ENCODE measurements at regions of chrX and their contacts with region 1.

Region 1: DNA sequence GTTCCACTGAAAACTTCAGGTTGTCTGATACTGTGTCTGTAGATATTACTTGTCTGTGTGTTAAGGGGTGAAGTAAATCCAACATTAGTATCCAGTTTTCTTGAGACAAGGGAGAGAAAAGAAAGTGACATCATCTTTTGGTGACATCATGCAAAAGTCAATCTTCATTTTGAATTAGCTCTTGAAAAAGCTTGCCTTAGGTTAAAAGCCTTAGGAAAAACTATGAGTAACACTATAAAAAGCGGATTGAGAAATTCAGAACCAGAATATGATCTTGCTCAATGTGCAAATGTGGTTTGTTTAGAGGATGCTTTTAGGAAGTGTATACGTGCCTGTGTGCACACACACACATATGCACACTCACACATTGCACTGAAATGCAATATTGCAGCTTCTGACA is 345.8 kb upstream of the CASK start:
- DNase-seq: no peak
- ATAC-seq: no peak
- H3K4me3 ChIP-seq: no peak overlapping the region
- H3K27ac ChIP-seq: no peak overlapping the region
- H3K4me1 ChIP-seq: no peaks in the 10 kb centered on the region
- H3K27me3 ChIP-seq: no peaks in the 10 kb centered on the region
- CTCF ChIP-seq: no peak
- POLR2A ChIP-seq: no peak

Region 2: DNA sequence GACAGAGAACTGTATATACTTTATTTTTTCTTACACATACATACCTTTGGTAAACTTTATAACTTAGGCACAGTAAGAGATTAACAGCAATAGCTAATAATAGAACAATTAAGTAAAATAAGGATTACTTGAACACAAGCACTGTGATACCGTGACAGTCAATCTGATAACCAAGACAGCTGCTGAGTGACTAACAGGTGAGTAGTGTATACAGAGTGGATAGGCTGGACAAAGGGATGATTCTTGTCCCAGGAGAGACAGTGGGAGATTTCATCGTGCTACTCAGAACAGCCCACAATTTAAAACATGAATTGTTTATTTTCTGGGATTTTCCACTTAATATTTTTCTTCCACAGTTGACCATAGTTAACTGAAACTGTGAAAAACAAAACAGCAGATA is 97.0 kb after region 1 on chrX:
- in situ Hi-C with region 1: loop called in 1 of 4 experiments (anchors 25 kb)
- intact Hi-C with region 1: no loop called
- DNase-seq: no peak
- ATAC-seq: no peak
- H3K4me3 ChIP-seq: no peak overlapping the region
- H3K27ac ChIP-seq: no peak overlapping the region
- H3K4me1 ChIP-seq: no peaks in the 10 kb centered on the region
- H3K27me3 ChIP-seq: no peaks in the 10 kb centered on the region
- CTCF ChIP-seq: no peak
- POLR2A ChIP-seq: no peak

Region 3: DNA sequence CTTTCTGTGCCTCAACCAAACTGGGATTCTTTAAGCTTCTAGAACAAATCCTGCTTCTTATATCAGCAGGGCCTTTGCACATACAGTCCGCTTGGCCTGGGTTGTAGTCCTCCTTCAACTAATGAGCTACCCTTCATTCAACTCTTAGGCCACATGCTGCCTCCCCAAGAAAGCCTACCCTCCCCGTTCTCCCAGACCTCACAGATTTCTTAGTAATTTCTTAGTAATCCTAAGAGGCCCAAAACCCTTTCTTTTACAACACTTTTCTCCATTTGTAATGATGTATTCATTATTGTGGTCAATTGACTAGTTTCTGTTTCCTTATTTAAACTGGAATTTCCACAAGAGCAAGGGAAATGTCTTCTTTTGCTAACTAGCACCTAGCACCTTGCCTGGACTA is 275.7 kb after region 1 on chrX:
- in situ Hi-C with region 1: no loop called
- intact Hi-C with region 1: no loop called
- DNase-seq: no peak
- ATAC-seq: no peak
- H3K4me3 ChIP-seq: no peak overlapping the region
- H3K27ac ChIP-seq: no peak overlapping the region
- H3K4me1 ChIP-seq: no peaks in the 10 kb centered on the region
- H3K27me3 ChIP-seq: no peaks in the 10 kb centered on the region
- CTCF ChIP-seq: no peak
- POLR2A ChIP-seq: no peak